ENCODE measurements at regions of chr11 and their contacts with region 1.

Region 1: DNA sequence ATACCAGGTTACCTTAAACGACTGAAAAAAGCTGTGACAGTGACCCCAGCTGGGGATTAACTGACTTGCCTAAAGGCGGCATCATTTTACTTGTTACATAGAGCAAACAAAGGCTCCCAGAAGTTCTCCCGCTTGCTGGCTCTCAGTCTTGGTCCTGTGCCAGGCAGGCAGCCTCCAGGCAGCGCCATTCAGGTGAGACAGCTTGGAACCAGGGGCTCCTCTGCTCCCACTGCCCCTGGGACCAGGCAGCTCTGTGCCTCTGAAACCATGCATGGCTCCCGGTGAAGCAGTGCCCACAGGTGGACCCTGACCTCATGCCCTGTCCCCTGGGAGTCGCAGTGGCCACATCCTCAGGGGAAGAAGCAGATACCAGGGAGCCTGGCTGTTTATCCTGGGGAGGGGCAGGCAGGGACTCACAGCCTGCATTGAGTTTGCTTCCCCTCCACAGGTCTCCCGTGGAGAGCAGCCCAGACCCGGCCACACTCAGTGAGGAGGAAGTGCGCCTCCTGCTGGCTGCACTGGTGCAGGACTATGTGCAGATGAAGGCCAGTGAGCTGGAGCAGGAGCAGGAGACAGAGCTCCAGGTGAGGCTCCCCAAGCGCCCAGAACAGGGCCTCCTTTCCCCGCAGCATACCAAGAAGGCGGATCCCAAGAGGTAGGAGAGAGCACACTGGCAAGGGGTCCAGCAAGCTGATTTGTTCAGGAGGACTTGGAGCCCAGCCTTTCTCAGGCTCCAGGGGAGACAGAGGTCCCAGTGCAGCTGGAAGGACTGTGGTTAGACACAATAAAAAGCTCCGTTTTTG is 15.6 kb upstream of the CYP2R1 start:
- DNase-seq: peak; percentile 17 to 61
- ATAC-seq: peak; percentile 83 to 92
- H3K4me3 ChIP-seq: no peak overlapping the region
- H3K27ac ChIP-seq: no peak overlapping the region
- H3K4me1 ChIP-seq: peaks cover 6% of the 10 kb centered on the region; the same call in 2 of the 3 replicates
- CTCF ChIP-seq: peak; percentile 80
- EP300 ChIP-seq: no peak
- POLR2A ChIP-seq: no peak
- RAD21 ChIP-seq: peak; percentile 57 to 58

Region 2: GRCh38 chr11:14746857-14747395 is 160.7 kb before region 1 on chr11:
- CTCF ChIA-PET with region 1: no interaction called
- POLR2A ChIA-PET with region 1: no interaction called
- DNase-seq: no peak
- ATAC-seq: no peak
- H3K4me3 ChIP-seq: no peak overlapping the region
- H3K27ac ChIP-seq: no peak overlapping the region
- H3K4me1 ChIP-seq: no peaks in the 10 kb centered on the region
- CTCF ChIP-seq: no peak
- EP300 ChIP-seq: no peak
- POLR2A ChIP-seq: no peak
- RAD21 ChIP-seq: no peak

Region 3: GRCh38 chr11:14803846-14804245 is 103.8 kb before region 1 on chr11:
- CTCF ChIA-PET with region 1: interaction called, 36 read pairs
- POLR2A ChIA-PET with region 1: no interaction called
- DNase-seq: no peak
- ATAC-seq: no peak
- H3K4me3 ChIP-seq: no peak overlapping the region
- H3K27ac ChIP-seq: no peak overlapping the region
- H3K4me1 ChIP-seq: peaks cover 13% of the 10 kb centered on the region
- CTCF ChIP-seq: no peak
- EP300 ChIP-seq: no peak
- POLR2A ChIP-seq: no peak
- RAD21 ChIP-seq: no peak

Region 4: DNA sequence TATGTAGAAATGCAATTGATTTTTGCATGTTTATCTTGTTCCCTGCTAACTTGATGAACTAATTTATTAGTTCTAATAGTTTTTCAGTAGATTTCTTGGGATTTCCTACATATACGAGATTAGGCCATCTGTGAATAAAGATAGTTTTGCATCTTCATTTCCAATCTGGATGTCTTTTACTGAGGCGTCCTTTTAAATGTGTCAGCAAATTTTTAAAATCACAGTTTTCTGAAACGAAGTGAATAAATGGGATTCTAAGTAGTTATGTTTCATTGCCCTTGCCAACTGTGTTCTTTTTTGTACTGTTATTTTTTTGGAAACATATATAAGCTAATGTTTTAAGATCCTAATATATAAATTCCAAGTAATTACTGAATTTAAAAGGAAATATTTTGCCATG is 65.6 kb before region 1 on chr11:
- CTCF ChIA-PET with region 1: no interaction called
- POLR2A ChIA-PET with region 1: no interaction called
- DNase-seq: no peak
- ATAC-seq: no peak
- H3K4me3 ChIP-seq: no peak overlapping the region
- H3K27ac ChIP-seq: no peak overlapping the region
- H3K4me1 ChIP-seq: no peaks in the 10 kb centered on the region
- CTCF ChIP-seq: no peak
- EP300 ChIP-seq: no peak
- POLR2A ChIP-seq: no peak
- RAD21 ChIP-seq: no peak

Region 5: DNA sequence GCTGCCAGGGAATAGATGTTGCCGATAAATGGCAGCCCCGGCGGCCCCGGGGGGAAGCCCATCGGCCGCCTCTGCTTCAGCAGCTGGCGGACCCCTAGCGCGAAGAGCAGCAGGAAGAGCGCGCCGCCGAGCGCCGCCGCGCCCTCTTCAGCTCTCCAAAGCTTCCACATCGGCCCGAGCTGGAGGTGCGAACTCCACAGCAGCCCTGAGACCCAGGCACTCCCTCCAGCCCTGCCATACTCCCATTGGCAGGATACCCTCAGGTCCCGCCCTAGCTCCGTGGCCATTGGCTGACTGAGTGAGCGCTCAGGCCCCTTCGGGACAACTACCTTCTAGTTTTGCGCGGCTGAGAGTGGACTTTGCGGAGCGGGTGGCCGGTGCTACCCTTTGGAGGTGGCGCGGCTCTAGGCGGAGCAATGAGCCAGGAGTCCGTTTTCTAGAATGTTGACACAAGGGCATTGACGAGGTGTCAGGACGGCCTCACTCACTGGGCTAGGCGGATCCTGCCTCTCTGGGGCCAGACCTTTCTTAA is 15.5 kb before region 1 on chr11 and contains the start of gene CYP2R1:
- CTCF ChIA-PET with region 1: interaction called, 124 read pairs
- POLR2A ChIA-PET with region 1: interaction called, 11 read pairs
- DNase-seq: peak; percentile 99
- ATAC-seq: peak; percentile 96 to 99
- H3K4me3 ChIP-seq: peak within 1 kb of the TSS; percentile 55
- H3K27ac ChIP-seq: peak within 1 kb of the TSS; percentile 73 to 91
- H3K4me1 ChIP-seq: peaks cover 11% of the 10 kb centered on the region; the same call in 1 of the 3 replicates
- CTCF ChIP-seq: no peak
- EP300 ChIP-seq: no peak
- POLR2A ChIP-seq: peak; percentile 66
- RAD21 ChIP-seq: no peak
- polyA plus RNA-seq, gene CYP2R1: 37.9 and 43.8 TPM in 2 replicates

Region 6: GRCh38 chr11:14949437-14950147 is 42.0 kb after region 1 on chr11:
- CTCF ChIA-PET with region 1: interaction called, 13 read pairs
- POLR2A ChIA-PET with region 1: no interaction called
- DNase-seq: no peak
- ATAC-seq: no peak
- H3K4me3 ChIP-seq: no peak overlapping the region
- H3K27ac ChIP-seq: no peak overlapping the region
- H3K4me1 ChIP-seq: no peaks in the 10 kb centered on the region
- CTCF ChIP-seq: no peak
- EP300 ChIP-seq: no peak
- POLR2A ChIP-seq: no peak
- RAD21 ChIP-seq: no peak

Region 7: DNA sequence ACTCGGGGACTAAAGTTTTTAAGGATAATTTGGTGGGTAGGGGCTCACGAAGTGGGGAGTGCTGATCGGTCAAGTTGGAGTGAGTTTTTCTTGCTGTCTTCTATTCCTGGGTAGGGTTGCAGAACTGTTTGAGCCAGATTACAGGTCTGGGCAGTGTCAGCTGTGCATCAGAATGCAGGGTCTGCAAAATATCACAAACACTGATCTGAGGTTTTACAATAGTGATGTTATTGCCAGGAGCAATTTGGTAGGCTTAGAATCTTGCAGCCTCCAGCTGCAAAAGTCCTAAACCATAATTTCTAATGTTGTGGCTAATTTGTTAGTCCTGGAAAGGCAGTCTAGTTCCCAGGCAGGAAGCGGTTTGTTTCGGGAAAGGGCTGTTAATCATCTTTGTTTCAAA is 104.2 kb after region 1 on chr11:
- CTCF ChIA-PET with region 1: interaction called, 36 read pairs
- POLR2A ChIA-PET with region 1: no interaction called
- DNase-seq: no peak
- ATAC-seq: no peak
- H3K4me3 ChIP-seq: no peak overlapping the region
- H3K27ac ChIP-seq: no peak overlapping the region
- H3K4me1 ChIP-seq: no peaks in the 10 kb centered on the region
- CTCF ChIP-seq: no peak
- EP300 ChIP-seq: no peak
- POLR2A ChIP-seq: no peak
- RAD21 ChIP-seq: no peak

Region 8: GRCh38 chr11:15153231-15153630 is 245.6 kb after region 1 on chr11:
- CTCF ChIA-PET with region 1: no interaction called
- POLR2A ChIA-PET with region 1: no interaction called
- DNase-seq: no peak
- ATAC-seq: no peak
- H3K4me3 ChIP-seq: no peak overlapping the region
- H3K27ac ChIP-seq: no peak overlapping the region
- H3K4me1 ChIP-seq: no peaks in the 10 kb centered on the region
- CTCF ChIP-seq: no peak
- EP300 ChIP-seq: no peak
- POLR2A ChIP-seq: no peak
- RAD21 ChIP-seq: no peak

Region 9: GRCh38 chr11:16613512-16614381 is 1706.1 kb after region 1 on chr11:
- CTCF ChIA-PET with region 1: interaction called, 13 read pairs
- POLR2A ChIA-PET with region 1: no interaction called
- DNase-seq: peak; percentile 79 to 83
- ATAC-seq: peak; percentile 95 to 99
- H3K4me3 ChIP-seq: peak overlapping the region; percentile 49
- H3K27ac ChIP-seq: peak overlapping the region in 1 of 2 experiments; percentile 40; a peak in 1 of 6 replicates
- H3K4me1 ChIP-seq: peaks cover 10% of the 10 kb centered on the region; the same call in 2 of the 3 replicates
- CTCF ChIP-seq: peak; percentile 81
- EP300 ChIP-seq: no peak
- POLR2A ChIP-seq: no peak
- RAD21 ChIP-seq: peak; percentile 91 to 93

Measured in A549 (cell line).